GM18951 (cell line): ENCODE measurements at regions of chr3 and their contacts with region 1.

Region 1: GRCh38 chr3:66816090-66816761 is 181.9 kb upstream of the KBTBD8 start:
- POLR2A ChIP-seq: no peak

Region 2: DNA sequence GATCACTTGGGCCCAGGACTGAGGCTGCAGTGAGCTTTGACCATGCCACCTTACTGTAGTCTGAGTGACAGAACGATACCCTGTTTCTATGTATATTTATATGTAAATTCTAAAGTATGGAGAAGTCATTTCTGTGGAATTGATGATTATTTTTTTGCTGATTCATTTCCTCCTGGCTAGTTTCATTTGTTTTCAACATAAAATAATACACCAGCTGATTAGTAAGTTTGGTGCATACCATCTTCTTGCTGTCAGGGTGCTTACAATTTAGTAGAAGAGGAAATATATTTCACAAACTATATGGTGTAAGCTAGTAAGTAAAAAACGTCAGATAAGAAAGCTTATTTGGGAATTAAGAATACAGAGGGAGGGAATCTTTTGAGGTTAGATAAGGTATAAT is 559.4 kb before region 1 on chr3:
- in situ Hi-C with region 1: loop called (anchors 5 kb)
- POLR2A ChIP-seq: no peak

Region 3: DNA sequence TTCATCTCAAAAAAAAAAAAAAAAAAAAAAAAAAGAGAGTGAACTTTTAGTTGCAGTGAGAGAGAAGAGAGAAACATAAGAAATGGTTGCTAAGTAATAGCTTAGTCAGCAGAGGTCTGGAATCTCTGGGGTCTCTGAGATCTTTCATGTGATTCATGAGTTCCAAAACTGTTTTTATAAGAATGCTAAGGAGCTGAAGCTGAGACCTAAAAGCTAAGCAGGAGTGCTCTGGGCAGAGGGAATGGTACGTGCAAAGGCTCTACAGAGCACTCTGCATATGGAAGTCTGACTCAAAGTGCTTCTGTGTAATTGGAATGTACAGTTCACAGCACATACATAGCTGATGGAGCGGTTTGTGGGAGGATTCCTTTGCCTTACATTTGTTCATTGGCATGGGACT is 249.1 kb before region 1 on chr3:
- in situ Hi-C with region 1: no loop called
- POLR2A ChIP-seq: no peak

Region 4: GRCh38 chr3:66609659-66610561 is 206.3 kb before region 1 on chr3:
- in situ Hi-C with region 1: no loop called
- POLR2A ChIP-seq: no peak